ENCODE measurements at regions of chr12 and their contacts with region 1.

Region 1: DNA sequence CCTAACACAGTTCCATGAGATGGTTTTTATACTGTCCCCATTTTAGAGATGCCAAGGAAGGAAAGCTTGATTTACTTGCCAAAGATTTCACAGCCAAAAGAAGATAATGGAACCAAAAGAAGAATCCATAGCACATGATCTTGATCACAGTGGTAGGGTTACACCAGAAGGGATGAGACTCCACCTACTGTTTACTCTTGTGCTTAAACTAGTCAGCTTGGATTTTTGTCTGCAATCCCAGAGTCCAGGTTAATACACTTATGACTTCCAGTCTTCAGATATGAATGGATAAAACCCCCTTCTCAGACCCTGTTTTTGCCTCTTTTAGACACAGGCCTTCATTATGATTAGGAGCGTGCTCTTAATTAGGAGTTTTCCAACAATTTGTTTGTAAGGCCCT is 454.2 kb downstream of the AEBP2 start:
- DNase-seq: peak; percentile 45
- H3K4me3 ChIP-seq: no peak overlapping the region
- H3K27ac ChIP-seq: no peak overlapping the region
- H3K4me1 ChIP-seq: peaks cover 5% of the 10 kb centered on the region
- H3K27me3 ChIP-seq: no peaks in the 10 kb centered on the region
- CTCF ChIP-seq: peak; percentile 52

Region 2: GRCh38 chr12:19739183-19739776 is 154.2 kb before region 1 on chr12:
- CTCF ChIA-PET with region 1: no interaction called
- POLR2A ChIA-PET with region 1: no interaction called
- intact Hi-C with region 1: loop called (anchors 5 kb)
- DNase-seq: peak; percentile 81
- H3K4me3 ChIP-seq: no peak overlapping the region
- H3K27ac ChIP-seq: no peak overlapping the region
- H3K4me1 ChIP-seq: no peaks in the 10 kb centered on the region
- H3K27me3 ChIP-seq: peaks cover 8% of the 10 kb centered on the region
- CTCF ChIP-seq: peak; percentile 74

Region 3: DNA sequence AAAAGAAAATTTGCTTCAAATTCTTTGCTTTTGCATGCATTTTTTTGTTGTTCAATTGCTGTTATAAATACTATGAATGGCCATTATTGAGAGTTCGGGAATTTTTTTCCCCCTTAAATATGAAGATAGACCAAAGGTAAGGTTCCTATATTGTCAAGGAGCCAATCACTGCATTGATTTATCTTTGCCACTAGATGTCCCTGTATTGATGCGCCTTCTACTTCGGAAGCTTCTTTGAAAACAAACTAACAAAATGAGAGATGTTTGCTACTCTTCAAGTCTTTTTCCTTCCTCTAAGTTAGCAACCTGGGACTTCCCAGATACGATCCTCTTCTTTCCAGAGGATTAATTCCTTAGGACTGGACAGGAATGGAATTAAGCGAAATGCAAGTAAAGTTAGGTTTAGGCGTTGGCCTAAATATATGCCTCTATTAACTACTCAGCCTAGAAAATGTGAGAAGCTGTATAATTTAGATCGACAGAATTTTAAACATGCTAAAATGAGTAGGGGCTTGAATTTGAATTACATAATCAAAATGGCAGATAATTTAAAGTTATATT is 136.1 kb before region 1 on chr12:
- CTCF ChIA-PET with region 1: no interaction called
- POLR2A ChIA-PET with region 1: no interaction called
- intact Hi-C with region 1: loop called (anchors 5 kb)
- DNase-seq: peak; percentile 54
- H3K4me3 ChIP-seq: no peak overlapping the region
- H3K27ac ChIP-seq: no peak overlapping the region
- H3K4me1 ChIP-seq: no peaks in the 10 kb centered on the region
- H3K27me3 ChIP-seq: no peaks in the 10 kb centered on the region
- CTCF ChIP-seq: peak; percentile 76

Region 4: DNA sequence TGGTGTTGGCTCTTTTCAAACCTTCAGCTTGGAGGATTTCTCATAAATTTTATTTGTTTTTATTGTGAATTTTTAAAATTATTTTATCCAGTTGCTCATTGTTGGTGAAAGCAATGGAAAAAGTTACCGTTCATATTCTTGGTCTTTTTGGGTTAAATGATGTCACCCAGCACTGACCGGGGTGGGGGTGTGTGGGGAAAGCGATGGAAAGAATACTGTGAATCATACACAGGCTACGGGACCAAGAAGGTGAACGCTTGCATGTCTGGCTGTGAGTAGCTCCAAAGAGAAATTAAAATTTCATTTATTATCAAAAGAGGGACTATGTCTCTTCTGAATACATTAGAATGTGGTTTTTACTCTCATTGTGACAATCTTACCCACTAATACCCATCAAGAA is 24.1 kb before region 1 on chr12:
- CTCF ChIA-PET with region 1: no interaction called
- POLR2A ChIA-PET with region 1: no interaction called
- intact Hi-C with region 1: no loop called
- DNase-seq: no peak
- H3K4me3 ChIP-seq: no peak overlapping the region
- H3K27ac ChIP-seq: no peak overlapping the region
- H3K4me1 ChIP-seq: no peaks in the 10 kb centered on the region
- H3K27me3 ChIP-seq: no peaks in the 10 kb centered on the region
- CTCF ChIP-seq: no peak

Region 5: DNA sequence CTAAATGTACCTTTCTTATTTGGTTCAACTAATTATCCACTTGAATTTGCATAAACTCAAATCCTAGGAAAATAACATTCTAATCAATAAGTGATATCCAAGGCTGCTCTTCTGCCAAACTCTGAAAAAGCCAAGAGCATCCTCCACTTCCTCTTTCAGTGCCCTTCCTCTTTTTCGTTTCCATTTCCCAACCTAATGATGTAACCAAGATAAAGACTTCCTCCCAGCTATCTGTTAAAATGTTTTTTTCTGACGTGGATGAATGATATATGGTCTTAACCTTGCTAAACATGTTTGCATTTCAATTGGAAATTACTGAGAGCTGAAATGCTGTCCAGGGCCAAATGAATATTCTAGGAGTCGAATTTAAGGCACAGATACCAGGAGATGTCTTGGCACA is 15.3 kb after region 1 on chr12:
- CTCF ChIA-PET with region 1: no interaction called
- POLR2A ChIA-PET with region 1: interaction called, 16 read pairs
- intact Hi-C with region 1: no loop called
- DNase-seq: no peak
- H3K4me3 ChIP-seq: no peak overlapping the region
- H3K27ac ChIP-seq: no peak overlapping the region
- H3K4me1 ChIP-seq: no peaks in the 10 kb centered on the region
- H3K27me3 ChIP-seq: no peaks in the 10 kb centered on the region
- CTCF ChIP-seq: no peak